CD4-positive, alpha-beta T cell (primary cell): ENCODE measurements at regions of chr3 and their contacts with region 1.

Region 1: GRCh38 chr3:14651440-14652251 is at the start of gene CCDC174:
- DNase-seq: peak; percentile 90 to 100 (median 94)
- ATAC-seq: peak; percentile 97
- H3K4me3 ChIP-seq: peak within 1 kb of the TSS; percentile 75
- H3K4me3 Mint-ChIP-seq: peak within 1 kb of the TSS; percentile 87
- H3K27ac ChIP-seq: peak within 1 kb of the TSS; percentile 76 to 97
- H3K27ac Mint-ChIP-seq: peak within 1 kb of the TSS; percentile 85
- H3K4me1 ChIP-seq: peaks cover 29% of the 10 kb centered on the region
- H3K4me1 Mint-ChIP-seq: peaks cover 61% of the 10 kb centered on the region
- H3K27me3 ChIP-seq: no peaks in the 10 kb centered on the region
- H3K27me3 Mint-ChIP-seq: no peaks in the 10 kb centered on the region
- CTCF ChIP-seq: no peak
- total RNA-seq, gene CCDC174: 32.9 to 37.5 TPM

Region 2: GRCh38 chr3:12841149-12841970 is 1810.3 kb before region 1 on chr3 and contains the start of gene RPL32:
- CTCF ChIA-PET with region 1: interaction called, 3 read pairs
- POLR2A ChIA-PET with region 1: interaction called, 11 read pairs
- intact Hi-C with region 1: no loop called
- DNase-seq: peak; percentile 76 to 96 (median 82)
- ATAC-seq: peak; percentile 91
- H3K4me3 ChIP-seq: peak within 1 kb of the TSS; percentile 86
- H3K4me3 Mint-ChIP-seq: peak within 1 kb of the TSS; percentile 93
- H3K27ac ChIP-seq: peak within 1 kb of the TSS; percentile 90 to 94
- H3K27ac Mint-ChIP-seq: peak within 1 kb of the TSS; percentile 99
- H3K4me1 ChIP-seq: peaks cover 39% of the 10 kb centered on the region
- H3K4me1 Mint-ChIP-seq: peaks cover 55% of the 10 kb centered on the region
- H3K27me3 ChIP-seq: no peaks in the 10 kb centered on the region
- H3K27me3 Mint-ChIP-seq: no peaks in the 10 kb centered on the region
- CTCF ChIP-seq: peak; percentile 74
- total RNA-seq, gene RPL32: 4,308 to 4,667 TPM

Region 3: DNA sequence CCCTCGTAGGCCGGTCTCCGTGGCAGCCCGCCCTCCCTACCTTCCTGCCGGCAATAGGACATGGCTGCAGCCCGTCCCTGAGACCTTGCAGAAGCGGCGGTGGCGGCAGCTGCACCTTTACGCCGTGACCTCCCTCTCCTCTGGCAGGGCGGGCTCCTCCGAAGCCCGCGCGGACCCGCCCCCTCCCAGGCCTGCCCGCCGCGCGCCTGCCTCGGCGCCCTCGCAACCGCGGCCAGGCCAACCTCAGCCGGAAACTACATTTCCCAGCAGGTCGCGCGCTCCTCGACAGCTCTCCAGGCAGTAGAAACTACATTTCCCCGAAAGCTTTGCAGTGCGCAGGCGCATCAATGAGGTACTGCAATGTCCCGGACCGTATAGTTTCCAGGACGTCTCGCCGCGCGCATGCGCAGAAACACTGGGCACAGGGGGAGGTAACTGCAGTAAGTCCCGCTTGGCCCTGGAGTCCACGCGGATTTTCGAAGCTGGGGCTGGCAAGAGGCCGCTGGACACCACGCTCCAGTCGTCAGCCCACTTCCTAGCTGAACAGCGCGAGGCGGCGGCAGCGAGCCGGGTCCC is 526.9 kb before region 1 on chr3 and contains the starts of genes CHCHD4 and TMEM43:
- CTCF ChIA-PET with region 1: no interaction called
- POLR2A ChIA-PET with region 1: interaction called, 30 read pairs
- intact Hi-C with region 1: loop called in 1 of 2 experiments (anchors 2 kb)
- DNase-seq: peak; percentile 94 to 100 (median 98)
- ATAC-seq: peak; percentile 89
- H3K4me3 ChIP-seq: peak within 1 kb of the TSS; percentile 96
- H3K4me3 Mint-ChIP-seq: peak within 1 kb of the TSS; percentile 97
- H3K27ac ChIP-seq: peak within 1 kb of the TSS; percentile 76 to 86
- H3K27ac Mint-ChIP-seq: peak within 1 kb of the TSS; percentile 91
- H3K4me1 ChIP-seq: peaks cover 53% of the 10 kb centered on the region
- H3K4me1 Mint-ChIP-seq: peaks cover 73% of the 10 kb centered on the region
- H3K27me3 ChIP-seq: no peaks in the 10 kb centered on the region
- H3K27me3 Mint-ChIP-seq: no peaks in the 10 kb centered on the region
- CTCF ChIP-seq: no peak
- total RNA-seq, gene CHCHD4: 0.50 to 1.1 TPM
- total RNA-seq, gene TMEM43: 24.8 to 27.6 TPM

Region 4: GRCh38 chr3:14525685-14526631 is 125.7 kb before region 1 on chr3:
- CTCF ChIA-PET with region 1: no interaction called
- POLR2A ChIA-PET with region 1: no interaction called
- intact Hi-C with region 1: no loop called
- DNase-seq: no peak
- ATAC-seq: no peak
- H3K4me3 ChIP-seq: no peak overlapping the region
- H3K4me3 Mint-ChIP-seq: no peak overlapping the region
- H3K27ac ChIP-seq: no peak overlapping the region
- H3K27ac Mint-ChIP-seq: no peak overlapping the region
- H3K4me1 ChIP-seq: no peaks in the 10 kb centered on the region
- H3K4me1 Mint-ChIP-seq: no peaks in the 10 kb centered on the region
- H3K27me3 ChIP-seq: no peaks in the 10 kb centered on the region
- H3K27me3 Mint-ChIP-seq: peaks cover 4% of the 10 kb centered on the region
- CTCF ChIP-seq: no peak

Region 5: DNA sequence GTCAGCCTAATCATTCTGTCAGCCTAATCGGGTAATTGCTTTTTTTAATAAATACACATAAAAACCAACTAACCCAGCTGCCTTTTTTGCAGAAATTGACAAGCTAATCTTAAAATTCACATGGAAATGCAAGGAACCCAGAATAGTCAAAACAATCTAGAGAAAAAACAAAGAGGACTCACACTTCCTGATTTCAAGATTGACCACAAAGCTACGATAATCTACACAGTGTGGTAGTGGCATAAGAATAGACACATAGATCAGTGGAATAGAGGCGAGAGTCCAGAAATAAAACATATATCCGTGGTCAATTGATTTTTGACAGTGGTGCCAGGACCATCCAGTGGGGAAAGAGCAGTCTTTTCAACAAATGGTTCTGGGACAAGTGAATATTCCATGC is 20.9 kb after region 1 on chr3:
- CTCF ChIA-PET with region 1: no interaction called
- POLR2A ChIA-PET with region 1: interaction called, 11 read pairs
- intact Hi-C with region 1: no loop called
- DNase-seq: no peak
- ATAC-seq: no peak
- H3K4me3 ChIP-seq: no peak overlapping the region
- H3K4me3 Mint-ChIP-seq: no peak overlapping the region
- H3K27ac ChIP-seq: no peak overlapping the region
- H3K27ac Mint-ChIP-seq: no peak overlapping the region
- H3K4me1 ChIP-seq: no peaks in the 10 kb centered on the region
- H3K4me1 Mint-ChIP-seq: no peaks in the 10 kb centered on the region
- H3K27me3 ChIP-seq: no peaks in the 10 kb centered on the region
- H3K27me3 Mint-ChIP-seq: no peaks in the 10 kb centered on the region
- CTCF ChIP-seq: no peak

Region 6: GRCh38 chr3:14947886-14948555 is 296.4 kb after region 1 on chr3:
- CTCF ChIA-PET with region 1: no interaction called
- POLR2A ChIA-PET with region 1: interaction called, 40 read pairs
- intact Hi-C with region 1: loop called (anchors 1 to 10 kb)
- DNase-seq: peak; percentile 93 to 97 (median 95)
- ATAC-seq: peak; percentile 90
- H3K4me3 ChIP-seq: peak overlapping the region; percentile 96
- H3K4me3 Mint-ChIP-seq: peak overlapping the region; percentile 98
- H3K27ac ChIP-seq: peak overlapping the region; percentile 98 to 99
- H3K27ac Mint-ChIP-seq: peak overlapping the region; percentile 98
- H3K4me1 ChIP-seq: peaks cover 30% of the 10 kb centered on the region
- H3K4me1 Mint-ChIP-seq: peaks cover 66% of the 10 kb centered on the region
- H3K27me3 ChIP-seq: no peaks in the 10 kb centered on the region
- H3K27me3 Mint-ChIP-seq: no peaks in the 10 kb centered on the region
- CTCF ChIP-seq: no peak

Region 7: DNA sequence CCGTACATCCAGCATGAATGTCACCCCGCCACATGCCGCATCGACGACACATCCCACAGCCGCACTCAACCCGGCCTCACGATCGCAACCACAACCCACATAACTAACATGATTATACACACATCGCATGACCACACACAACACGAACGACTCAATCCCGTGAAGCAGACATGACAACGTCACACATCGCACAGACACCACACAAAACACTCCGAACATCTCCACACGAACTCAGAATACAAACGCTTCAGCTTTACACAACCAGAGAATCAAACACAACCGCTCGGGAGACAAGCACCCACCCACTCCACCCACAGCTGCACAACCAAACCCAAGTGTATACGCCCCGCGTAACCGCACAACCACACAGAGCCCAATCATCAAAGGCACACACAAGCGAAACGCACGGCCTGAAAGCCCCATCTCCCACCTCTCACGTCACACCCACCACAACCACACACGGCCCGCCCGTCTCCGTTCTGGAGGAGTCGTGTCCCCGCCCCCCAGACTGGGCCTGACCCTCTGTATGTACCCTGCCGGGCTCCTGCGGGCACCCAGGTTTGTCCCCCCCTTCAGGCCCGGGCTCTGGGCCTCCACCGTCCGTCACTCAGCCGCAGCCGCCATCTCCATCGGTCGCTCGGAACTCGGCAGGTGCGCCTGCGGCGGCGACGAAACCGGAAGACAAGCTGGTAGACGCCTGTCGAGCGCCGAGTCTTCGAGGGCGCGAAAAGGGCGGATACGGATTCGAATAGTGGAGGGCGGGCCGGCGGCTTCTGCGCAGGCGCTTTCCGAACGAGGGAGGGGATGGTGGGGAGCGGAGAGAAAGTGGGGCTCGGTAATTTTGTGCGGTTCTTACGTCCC is 447.1 kb after region 1 on chr3 and contains the start of gene RBSN:
- CTCF ChIA-PET with region 1: no interaction called
- POLR2A ChIA-PET with region 1: interaction called, 28 read pairs
- intact Hi-C with region 1: loop called in 1 of 2 experiments (anchors 1 kb)
- DNase-seq: peak; percentile 90 to 98 (median 94)
- ATAC-seq: peak; percentile 72
- H3K4me3 ChIP-seq: peak within 1 kb of the TSS; percentile 92
- H3K4me3 Mint-ChIP-seq: peak within 1 kb of the TSS; percentile 96
- H3K27ac ChIP-seq: peak within 1 kb of the TSS; percentile 96 to 98
- H3K27ac Mint-ChIP-seq: peak within 1 kb of the TSS; percentile 97
- H3K4me1 ChIP-seq: peaks cover 33% of the 10 kb centered on the region
- H3K4me1 Mint-ChIP-seq: peaks cover 36% of the 10 kb centered on the region
- H3K27me3 ChIP-seq: no peaks in the 10 kb centered on the region
- H3K27me3 Mint-ChIP-seq: peaks cover 5% of the 10 kb centered on the region
- CTCF ChIP-seq: no peak
- total RNA-seq, gene RBSN: 57.2 to 57.9 TPM